PC-3 (cell line): ENCODE measurements at regions of chr12 and their contacts with region 1.

Region 1: GRCh38 chr12:103858953-103859601 is 18.0 kb upstream of the NT5DC3 start:
- DNase-seq: peak; percentile 99
- ATAC-seq: peak; percentile 95
- H3K4me3 ChIP-seq: peak overlapping the region; percentile 7; the same call in 1 of the 2 replicates
- H3K27ac ChIP-seq: peak overlapping the region; percentile 88
- H3K4me1 ChIP-seq: peaks cover 43% of the 10 kb centered on the region
- H3K27me3 ChIP-seq: no peaks in the 10 kb centered on the region
- CTCF ChIP-seq: no peak

Region 2: GRCh38 chr12:103626498-103626897 is 232.6 kb before region 1 on chr12:
- CTCF ChIA-PET with region 1: no interaction called
- POLR2A ChIA-PET with region 1: no interaction called
- intact Hi-C with region 1: loop called (anchors 5 kb)
- DNase-seq: peak; percentile 65
- ATAC-seq: peak; percentile 76
- H3K4me3 ChIP-seq: no peak overlapping the region
- H3K27ac ChIP-seq: no peak overlapping the region
- H3K4me1 ChIP-seq: peaks cover 3% of the 10 kb centered on the region; the same call in 1 of the 2 replicates
- H3K27me3 ChIP-seq: no peaks in the 10 kb centered on the region; the same call in 1 of the 2 replicates
- CTCF ChIP-seq: peak; percentile 47; the same call in 1 of the 2 replicates

Region 3: GRCh38 chr12:103805961-103806360 is 53.1 kb before region 1 on chr12:
- CTCF ChIA-PET with region 1: no interaction called
- POLR2A ChIA-PET with region 1: no interaction called
- intact Hi-C with region 1: loop called (anchors 1 kb)
- DNase-seq: no peak
- ATAC-seq: no peak
- H3K4me3 ChIP-seq: no peak overlapping the region
- H3K27ac ChIP-seq: peak overlapping the region; percentile 81
- H3K4me1 ChIP-seq: peaks cover 41% of the 10 kb centered on the region
- H3K27me3 ChIP-seq: no peaks in the 10 kb centered on the region
- CTCF ChIP-seq: no peak

Region 4: GRCh38 chr12:103840876-103841689 is 18.0 kb before region 1 on chr12 and contains the start of gene NT5DC3:
- CTCF ChIA-PET with region 1: no interaction called
- POLR2A ChIA-PET with region 1: interaction called, 9 read pairs
- intact Hi-C with region 1: loop called (anchors 1 kb)
- DNase-seq: peak; percentile 89
- ATAC-seq: peak; percentile 69
- H3K4me3 ChIP-seq: peak within 1 kb of the TSS; percentile 93
- H3K27ac ChIP-seq: peak within 1 kb of the TSS; percentile 92
- H3K4me1 ChIP-seq: peaks cover 31% of the 10 kb centered on the region
- H3K27me3 ChIP-seq: no peaks in the 10 kb centered on the region
- CTCF ChIP-seq: no peak
- total RNA-seq, gene NT5DC3: 14.9 and 15.7 TPM in 2 replicates